WTC11 (cell line): ENCODE measurements at regions of chr3 and their contacts with region 1.

Region 1: DNA sequence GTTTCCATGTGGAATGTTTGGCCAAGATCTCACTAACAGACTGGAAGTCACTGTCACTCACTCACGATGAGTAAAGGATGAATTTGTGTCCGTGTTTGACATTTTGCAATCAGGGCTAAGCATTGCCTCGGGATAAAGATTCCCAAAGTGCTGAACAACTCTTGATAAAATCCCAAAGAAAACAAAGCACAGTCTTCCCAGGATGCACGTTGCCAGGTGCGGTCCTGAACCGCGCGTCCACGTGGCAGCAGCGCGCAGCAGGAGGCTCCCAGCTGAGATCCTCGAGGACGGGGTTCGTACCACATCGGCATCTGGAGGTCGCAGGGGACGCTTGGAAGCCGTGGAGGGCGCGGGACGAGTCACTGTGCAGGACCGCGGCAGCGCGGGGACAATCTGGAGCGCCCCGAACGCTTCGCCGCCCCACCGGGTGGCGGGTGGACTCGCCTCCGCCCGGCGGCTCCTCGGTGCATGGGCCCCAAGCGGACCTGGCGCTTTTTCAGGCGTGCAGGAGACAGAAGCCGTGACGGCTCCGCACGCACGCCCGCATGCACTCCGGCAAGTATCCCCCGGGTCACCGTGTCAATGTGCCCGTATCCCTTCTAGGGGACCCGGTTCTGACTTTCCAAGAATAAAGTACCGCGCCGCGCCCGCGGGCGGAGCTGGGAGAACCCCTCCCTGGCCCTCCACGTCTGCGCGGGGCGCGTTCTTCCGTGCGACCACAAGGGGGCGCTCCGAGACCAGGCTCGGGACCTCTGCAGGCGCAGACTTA is 17.7 kb downstream of the CPN2 start:
- DNase-seq: peak; percentile 95
- ATAC-seq: peak; percentile 87
- H3K4me3 Mint-ChIP-seq: peak overlapping the region; percentile 69
- H3K27ac Mint-ChIP-seq: no peak overlapping the region
- H3K4me1 Mint-ChIP-seq: peaks cover 38% of the 10 kb centered on the region
- H3K27me3 Mint-ChIP-seq: peaks cover 34% of the 10 kb centered on the region
- CTCF ChIP-seq: peak; percentile 100

Region 2: GRCh38 chr3:194344012-194344411 is 10.6 kb after region 1 on chr3:
- CTCF ChIA-PET with region 1: interaction called, 30 read pairs
- POLR2A ChIA-PET with region 1: no interaction called
- DNase-seq: peak; percentile 90
- ATAC-seq: peak; percentile 42
- H3K4me3 Mint-ChIP-seq: no peak overlapping the region
- H3K27ac Mint-ChIP-seq: no peak overlapping the region
- H3K4me1 Mint-ChIP-seq: peaks cover 25% of the 10 kb centered on the region
- H3K27me3 Mint-ChIP-seq: peaks cover 31% of the 10 kb centered on the region
- CTCF ChIP-seq: peak; percentile 88

Region 3: GRCh38 chr3:194357681-194358080 is 24.3 kb after region 1 on chr3:
- CTCF ChIA-PET with region 1: no interaction called
- POLR2A ChIA-PET with region 1: no interaction called
- DNase-seq: no peak
- ATAC-seq: no peak
- H3K4me3 Mint-ChIP-seq: no peak overlapping the region
- H3K27ac Mint-ChIP-seq: no peak overlapping the region
- H3K4me1 Mint-ChIP-seq: peaks cover 5% of the 10 kb centered on the region
- H3K27me3 Mint-ChIP-seq: peaks cover 7% of the 10 kb centered on the region; the same call in 1 of the 2 replicates
- CTCF ChIP-seq: no peak

Region 4: DNA sequence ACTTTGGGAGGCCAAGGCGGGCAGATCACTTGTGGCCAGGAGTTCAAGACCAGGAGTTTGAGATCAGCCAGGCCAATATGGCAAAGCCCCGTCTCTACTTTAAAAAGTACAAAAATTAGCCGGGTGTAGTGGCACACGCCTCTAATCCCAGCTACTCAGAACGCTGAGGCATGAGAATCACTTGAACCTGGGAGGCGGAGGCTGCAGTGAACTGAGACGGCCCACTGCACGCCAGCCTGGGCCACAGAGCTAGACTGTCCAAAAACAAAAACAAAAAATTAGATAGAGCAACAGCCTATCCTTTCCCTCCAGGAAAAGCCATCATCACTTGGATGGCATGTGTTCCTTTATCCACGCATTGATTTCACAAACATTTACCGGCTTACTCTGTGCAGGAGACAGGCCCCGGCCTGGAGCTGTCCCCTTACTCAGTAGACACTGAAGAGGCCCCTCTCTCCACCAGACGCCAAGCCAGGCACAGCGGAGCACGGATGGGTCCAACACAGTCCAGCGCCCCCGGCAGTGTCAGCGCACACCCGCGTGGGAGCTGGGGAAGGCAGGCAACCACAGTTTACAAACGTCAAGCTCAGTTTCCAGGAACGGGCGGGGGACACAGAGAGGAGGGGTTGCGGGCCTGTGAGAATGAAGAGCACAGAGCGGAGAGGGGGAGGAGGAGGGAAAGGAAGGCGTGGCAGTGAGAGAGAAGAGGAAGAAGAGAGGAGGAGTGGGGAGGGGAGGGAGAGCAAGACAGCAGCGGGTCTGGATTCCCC is 62.6 kb after region 1 on chr3:
- CTCF ChIA-PET with region 1: interaction called, 48 read pairs
- POLR2A ChIA-PET with region 1: interaction called, 4 read pairs
- DNase-seq: peak; percentile 45
- ATAC-seq: peak; percentile 66
- H3K4me3 Mint-ChIP-seq: peak overlapping the region; percentile 67
- H3K27ac Mint-ChIP-seq: no peak overlapping the region
- H3K4me1 Mint-ChIP-seq: peaks cover 27% of the 10 kb centered on the region
- H3K27me3 Mint-ChIP-seq: peaks cover 44% of the 10 kb centered on the region
- CTCF ChIP-seq: no peak

Region 5: GRCh38 chr3:194418671-194419070 is 85.3 kb after region 1 on chr3:
- CTCF ChIA-PET with region 1: no interaction called
- POLR2A ChIA-PET with region 1: no interaction called
- DNase-seq: no peak
- ATAC-seq: no peak
- H3K4me3 Mint-ChIP-seq: no peak overlapping the region
- H3K27ac Mint-ChIP-seq: no peak overlapping the region
- H3K4me1 Mint-ChIP-seq: no peaks in the 10 kb centered on the region
- H3K27me3 Mint-ChIP-seq: no peaks in the 10 kb centered on the region
- CTCF ChIP-seq: no peak

Region 6: DNA sequence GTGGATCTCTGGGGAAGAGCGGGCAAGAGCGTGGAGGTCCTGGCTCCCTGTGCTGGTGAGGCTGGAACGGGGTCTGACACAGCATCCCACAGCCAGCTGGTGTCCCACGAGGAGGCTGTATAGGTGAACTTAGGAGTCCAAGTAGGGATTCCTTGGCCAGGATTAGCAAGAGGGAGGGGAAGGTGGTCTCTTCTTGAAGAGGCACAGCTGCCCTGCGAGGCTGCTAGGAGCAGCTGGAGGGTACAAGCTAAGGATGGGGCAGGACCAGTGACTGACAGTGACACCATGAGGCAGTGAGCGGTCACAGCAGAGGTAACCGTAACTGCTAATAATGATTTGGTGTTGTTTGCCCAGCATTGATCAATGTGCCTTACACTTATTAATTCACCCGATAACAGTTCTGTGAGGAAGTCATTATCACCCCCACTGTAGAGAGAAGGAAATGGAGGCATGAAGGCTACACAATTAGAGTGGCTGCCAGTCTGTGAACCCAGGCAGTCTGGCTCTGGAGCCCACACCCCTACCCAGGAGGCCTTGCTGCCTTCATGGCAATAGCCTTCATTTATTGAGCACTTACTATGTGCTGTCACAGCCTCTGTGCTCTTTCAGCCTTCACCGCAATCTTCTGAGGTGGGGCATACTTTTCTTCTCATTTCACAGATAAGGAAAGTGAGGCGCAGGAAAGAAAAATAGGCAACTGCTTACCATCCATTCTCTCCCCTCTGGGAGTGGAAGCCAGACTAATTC is 240.5 kb after region 1 on chr3:
- CTCF ChIA-PET with region 1: interaction called, 11 read pairs
- POLR2A ChIA-PET with region 1: no interaction called
- DNase-seq: peak; percentile 40
- ATAC-seq: peak; percentile 94
- H3K4me3 Mint-ChIP-seq: no peak overlapping the region
- H3K27ac Mint-ChIP-seq: no peak overlapping the region
- H3K4me1 Mint-ChIP-seq: 0 out of 2 replicates have a peak, but pooled peaks cover 2% of the 10 kb centered on the region
- H3K27me3 Mint-ChIP-seq: no peaks in the 10 kb centered on the region
- CTCF ChIP-seq: 0 out of 2 replicates have a peak, but pooled peaks have one; percentile 17